H1 (cell line): ENCODE measurements at regions of chr6 and their contacts with region 1.

Region 1: GRCh38 chr6:167034056-167034455 is 34.9 kb downstream of the CEP43 start:
- DNase-seq: no peak
- H3K4me3 ChIP-seq: no peak overlapping the region
- H3K27ac ChIP-seq: no peak overlapping the region
- H3K4me1 ChIP-seq: no peaks in the 10 kb centered on the region
- H3K27me3 ChIP-seq: no peaks in the 10 kb centered on the region
- CTCF ChIP-seq: no peak
- EP300 ChIP-seq: no peak
- POLR2A ChIP-seq: no peak
- RAD21 ChIP-seq: no peak

Region 2: GRCh38 chr6:166956444-166957086 is 77.5 kb before region 1 on chr6 and contains the start of gene RNASET2:
- CTCF ChIA-PET with region 1: no interaction called
- POLR2A ChIA-PET with region 1: no interaction called
- DNase-seq: peak in 1 of 2 experiments; percentile 100
- H3K4me3 ChIP-seq: peak within 1 kb of the TSS; percentile 58 to 83 (median 72)
- H3K27ac ChIP-seq: no peak within 1 kb of the TSS
- H3K4me1 ChIP-seq: peaks cover 2 to 12% (median 5%) of the 10 kb centered on the region in 4 experiments; a peak in 6 of 7 replicates
- H3K27me3 ChIP-seq: peaks cover 0 to 6% (median 0%) of the 10 kb centered on the region in 4 experiments; a peak in 3 of 7 replicates
- CTCF ChIP-seq: no peak
- EP300 ChIP-seq: no peak
- POLR2A ChIP-seq: no peak; a peak in 1 of 3 replicates
- RAD21 ChIP-seq: no peak
- total RNA-seq, gene RNASET2: 20.8 and 22.9 TPM in 2 replicates

Region 3: GRCh38 chr6:167047554-167047953 is 13.5 kb after region 1 on chr6:
- CTCF ChIA-PET with region 1: interaction called, 21 read pairs
- POLR2A ChIA-PET with region 1: interaction called, 3 read pairs
- DNase-seq: no peak
- H3K4me3 ChIP-seq: no peak overlapping the region
- H3K27ac ChIP-seq: no peak overlapping the region
- H3K4me1 ChIP-seq: no peaks in the 10 kb centered on the region
- H3K27me3 ChIP-seq: no peaks in the 10 kb centered on the region
- CTCF ChIP-seq: no peak
- EP300 ChIP-seq: no peak
- POLR2A ChIP-seq: no peak
- RAD21 ChIP-seq: no peak

Region 4: GRCh38 chr6:167079853-167080297 is 45.8 kb after region 1 on chr6:
- CTCF ChIA-PET with region 1: no interaction called
- POLR2A ChIA-PET with region 1: no interaction called
- DNase-seq: no peak
- H3K4me3 ChIP-seq: no peak overlapping the region
- H3K27ac ChIP-seq: no peak overlapping the region
- H3K4me1 ChIP-seq: no peaks in the 10 kb centered on the region
- H3K27me3 ChIP-seq: no peaks in the 10 kb centered on the region
- CTCF ChIP-seq: peak; percentile 30 to 49 (median 44)
- EP300 ChIP-seq: no peak
- POLR2A ChIP-seq: no peak
- RAD21 ChIP-seq: peak in 1 of 2 experiments; percentile 38; a peak in 1 of 4 replicates